Activated naive CD8-positive, alpha-beta T cell treated with anti-CD3 and anti-CD28 coated beads, Interleukin-2, amount 10 ng/mL, durations not matched to agents 7 days and 5 days (primary cell): ENCODE measurements at regions of chr2 and their contacts with region 1.

Region 1: DNA sequence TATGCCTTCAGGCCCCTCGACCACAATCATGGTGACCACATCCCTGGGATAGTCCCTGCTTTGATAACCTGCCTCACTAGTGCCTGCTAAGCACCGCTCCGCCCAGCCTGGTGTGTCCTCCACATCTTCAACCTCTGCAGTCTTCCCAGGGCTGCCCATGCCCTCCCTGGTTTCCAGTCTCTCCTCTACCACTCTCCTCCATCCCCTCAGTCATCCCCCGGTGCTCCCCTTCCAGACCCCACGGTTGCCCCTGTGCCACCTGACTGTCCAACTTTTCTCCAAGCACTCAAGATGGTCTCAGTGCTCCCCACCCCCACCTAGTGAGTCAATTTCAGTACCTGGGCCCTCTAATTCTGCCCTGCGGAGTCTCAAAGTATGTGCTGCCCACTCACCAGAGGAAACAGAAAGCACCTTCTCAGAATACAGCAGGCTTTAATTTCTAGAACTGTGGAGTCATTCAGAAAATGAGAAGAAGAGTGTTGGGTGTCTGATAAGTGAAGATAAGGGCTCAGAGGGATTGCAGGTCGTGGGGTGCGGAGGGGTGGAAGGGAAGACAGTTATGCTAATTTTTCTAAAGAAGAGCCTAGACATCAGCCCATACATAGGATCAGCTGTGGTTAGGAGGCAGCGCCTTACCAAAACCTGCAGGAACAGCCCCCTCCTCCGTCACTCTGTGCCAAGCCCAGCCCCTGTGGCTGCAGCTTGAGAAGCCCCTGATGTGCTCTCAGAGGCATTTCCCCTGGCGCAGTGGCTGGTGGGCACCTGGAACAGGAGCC is 53.6 kb upstream of the CAB39 start:
- DNase-seq: peak; percentile 77
- ATAC-seq: peak; percentile 74
- H3K4me3 Mint-ChIP-seq: peak overlapping the region; percentile 93
- H3K27ac Mint-ChIP-seq: peak overlapping the region; percentile 98
- H3K4me1 Mint-ChIP-seq: peaks cover 72% of the 10 kb centered on the region
- H3K27me3 Mint-ChIP-seq: no peaks in the 10 kb centered on the region

Region 2: GRCh38 chr2:230602562-230603230 is 56.4 kb before region 1 on chr2:
- POLR2A ChIA-PET with region 1: interaction called, 11 read pairs
- DNase-seq: peak; percentile 62
- ATAC-seq: peak; percentile 95
- H3K4me3 Mint-ChIP-seq: peak overlapping the region; percentile 70
- H3K27ac Mint-ChIP-seq: peak overlapping the region; percentile 95
- H3K4me1 Mint-ChIP-seq: peaks cover 38% of the 10 kb centered on the region
- H3K27me3 Mint-ChIP-seq: no peaks in the 10 kb centered on the region

Region 3: DNA sequence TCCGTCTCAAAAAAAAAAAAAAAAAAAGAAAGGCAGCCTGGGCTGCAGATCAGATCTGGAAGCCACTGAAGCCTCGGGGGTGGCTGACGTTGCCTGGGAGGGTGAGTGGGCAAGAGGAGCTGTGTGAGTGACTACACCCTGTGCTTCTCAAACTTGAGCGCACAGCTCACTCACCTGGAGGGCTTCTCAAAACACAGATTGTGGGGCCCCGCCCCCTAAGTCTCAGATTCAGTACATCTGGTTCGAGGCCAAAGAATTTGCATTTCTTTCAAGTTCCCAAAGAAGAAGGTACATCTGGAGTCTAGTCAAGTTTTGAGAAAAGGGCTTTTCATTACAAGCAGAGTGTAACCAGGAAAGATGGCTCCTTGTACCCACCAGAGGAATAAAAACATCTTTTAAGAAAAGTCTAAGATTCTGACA is 44.1 kb before region 1 on chr2:
- POLR2A ChIA-PET with region 1: interaction called, 23 read pairs
- DNase-seq: no peak
- ATAC-seq: peak; percentile 76
- H3K4me3 Mint-ChIP-seq: peak overlapping the region; percentile 5
- H3K27ac Mint-ChIP-seq: peak overlapping the region; percentile 65
- H3K4me1 Mint-ChIP-seq: peaks cover 43% of the 10 kb centered on the region
- H3K27me3 Mint-ChIP-seq: peaks cover 2% of the 10 kb centered on the region

Region 4: GRCh38 chr2:230643576-230644291 is 15.3 kb before region 1 on chr2:
- POLR2A ChIA-PET with region 1: interaction called, 96 read pairs
- DNase-seq: peak; percentile 52
- ATAC-seq: peak; percentile 97
- H3K4me3 Mint-ChIP-seq: peak overlapping the region; percentile 63
- H3K27ac Mint-ChIP-seq: peak overlapping the region; percentile 87
- H3K4me1 Mint-ChIP-seq: peaks cover 25% of the 10 kb centered on the region
- H3K27me3 Mint-ChIP-seq: no peaks in the 10 kb centered on the region

Region 5: DNA sequence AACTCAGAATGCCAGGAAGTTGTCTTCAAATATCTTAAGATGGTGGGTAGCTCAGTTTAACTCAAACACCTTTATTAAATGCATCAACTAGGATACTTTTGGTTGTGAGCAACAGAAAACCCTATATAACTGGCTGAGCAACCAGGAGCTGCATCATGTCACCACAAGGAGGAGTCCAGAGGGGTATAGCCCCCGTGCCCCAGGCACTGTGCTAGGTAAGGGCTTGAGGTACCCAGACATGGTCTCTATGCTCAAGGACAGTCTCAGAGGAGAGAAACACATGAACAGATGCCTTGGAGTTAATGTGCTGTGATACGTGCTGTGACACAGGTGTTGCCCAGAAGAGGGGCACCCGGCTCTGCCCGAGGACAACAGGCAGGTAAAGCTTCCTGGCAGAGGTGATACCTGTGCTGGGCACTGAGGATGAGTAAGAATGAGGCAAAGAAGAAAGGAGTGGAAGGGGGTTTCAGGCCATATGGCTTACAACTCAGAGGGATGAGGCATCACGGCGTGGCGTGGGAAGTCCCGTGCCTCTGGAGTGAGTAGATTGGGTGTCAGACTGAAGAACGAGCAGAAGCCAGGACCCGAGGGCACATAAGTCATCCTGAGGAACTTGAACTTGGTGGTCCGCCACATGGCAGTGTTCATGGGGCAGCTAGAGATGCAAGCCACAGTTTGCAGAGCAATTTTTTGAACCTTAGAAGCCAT is 21.6 kb after region 1 on chr2:
- POLR2A ChIA-PET with region 1: interaction called, 74 read pairs
- DNase-seq: no peak
- ATAC-seq: no peak
- H3K4me3 Mint-ChIP-seq: no peak overlapping the region
- H3K27ac Mint-ChIP-seq: no peak overlapping the region
- H3K4me1 Mint-ChIP-seq: peaks cover 50% of the 10 kb centered on the region
- H3K27me3 Mint-ChIP-seq: no peaks in the 10 kb centered on the region

Region 6: DNA sequence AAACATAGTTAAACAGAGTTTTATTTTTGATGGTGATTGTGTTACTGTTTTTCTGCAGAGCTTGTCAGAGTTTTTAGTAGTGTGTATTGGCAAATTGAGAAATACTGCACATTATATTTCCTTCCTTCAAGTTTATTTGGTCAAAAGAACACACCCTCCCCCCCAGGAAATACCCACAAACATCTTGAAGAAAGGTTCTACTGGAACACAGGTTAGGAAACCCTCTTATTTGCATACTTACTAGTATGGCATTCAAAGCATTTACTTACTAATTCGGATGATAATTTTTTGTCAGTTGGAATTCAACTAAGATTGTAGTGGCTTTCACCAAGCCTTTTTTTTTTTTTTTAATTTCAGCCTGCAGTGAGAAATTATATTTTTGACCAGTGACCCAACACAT is 62.6 kb after region 1 on chr2:
- POLR2A ChIA-PET with region 1: interaction called, 11 read pairs
- DNase-seq: no peak
- ATAC-seq: no peak
- H3K4me3 Mint-ChIP-seq: peak overlapping the region; percentile 58
- H3K27ac Mint-ChIP-seq: peak overlapping the region; percentile 60
- H3K4me1 Mint-ChIP-seq: peaks cover 73% of the 10 kb centered on the region
- H3K27me3 Mint-ChIP-seq: no peaks in the 10 kb centered on the region

Region 7: DNA sequence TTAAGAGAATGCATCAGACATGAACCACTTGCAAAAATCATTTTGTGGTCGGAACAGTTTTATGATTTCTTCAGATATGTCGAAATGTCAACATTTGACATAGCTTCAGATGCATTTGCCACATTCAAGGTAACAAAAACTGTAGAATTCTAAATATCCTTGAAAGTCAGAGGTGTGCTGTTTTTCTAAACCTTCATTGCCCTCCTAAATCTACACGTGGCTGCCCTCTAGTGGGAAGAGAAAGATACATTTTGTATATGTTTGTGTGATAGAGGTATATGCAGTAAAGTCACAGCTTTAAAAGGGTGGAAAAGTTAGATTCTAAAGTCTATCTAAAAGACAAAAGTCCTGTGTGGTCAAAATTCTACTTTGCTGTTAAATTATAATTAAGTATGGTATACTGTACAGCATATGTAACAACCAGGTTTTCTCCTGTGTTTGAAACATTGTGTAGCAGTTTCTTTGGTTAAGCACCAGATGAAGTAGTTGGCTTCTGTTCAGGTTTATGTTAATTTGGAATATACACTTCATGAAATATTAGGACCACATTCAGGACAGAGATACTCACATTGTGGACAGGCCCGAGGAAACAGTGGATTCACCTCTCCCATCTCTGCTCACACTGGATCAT is 139.8 kb after region 1 on chr2:
- POLR2A ChIA-PET with region 1: interaction called, 15 read pairs
- DNase-seq: no peak
- ATAC-seq: no peak
- H3K4me3 Mint-ChIP-seq: peak overlapping the region; percentile 21
- H3K27ac Mint-ChIP-seq: peak overlapping the region; percentile 57
- H3K4me1 Mint-ChIP-seq: peaks cover 24% of the 10 kb centered on the region
- H3K27me3 Mint-ChIP-seq: no peaks in the 10 kb centered on the region

Region 8: DNA sequence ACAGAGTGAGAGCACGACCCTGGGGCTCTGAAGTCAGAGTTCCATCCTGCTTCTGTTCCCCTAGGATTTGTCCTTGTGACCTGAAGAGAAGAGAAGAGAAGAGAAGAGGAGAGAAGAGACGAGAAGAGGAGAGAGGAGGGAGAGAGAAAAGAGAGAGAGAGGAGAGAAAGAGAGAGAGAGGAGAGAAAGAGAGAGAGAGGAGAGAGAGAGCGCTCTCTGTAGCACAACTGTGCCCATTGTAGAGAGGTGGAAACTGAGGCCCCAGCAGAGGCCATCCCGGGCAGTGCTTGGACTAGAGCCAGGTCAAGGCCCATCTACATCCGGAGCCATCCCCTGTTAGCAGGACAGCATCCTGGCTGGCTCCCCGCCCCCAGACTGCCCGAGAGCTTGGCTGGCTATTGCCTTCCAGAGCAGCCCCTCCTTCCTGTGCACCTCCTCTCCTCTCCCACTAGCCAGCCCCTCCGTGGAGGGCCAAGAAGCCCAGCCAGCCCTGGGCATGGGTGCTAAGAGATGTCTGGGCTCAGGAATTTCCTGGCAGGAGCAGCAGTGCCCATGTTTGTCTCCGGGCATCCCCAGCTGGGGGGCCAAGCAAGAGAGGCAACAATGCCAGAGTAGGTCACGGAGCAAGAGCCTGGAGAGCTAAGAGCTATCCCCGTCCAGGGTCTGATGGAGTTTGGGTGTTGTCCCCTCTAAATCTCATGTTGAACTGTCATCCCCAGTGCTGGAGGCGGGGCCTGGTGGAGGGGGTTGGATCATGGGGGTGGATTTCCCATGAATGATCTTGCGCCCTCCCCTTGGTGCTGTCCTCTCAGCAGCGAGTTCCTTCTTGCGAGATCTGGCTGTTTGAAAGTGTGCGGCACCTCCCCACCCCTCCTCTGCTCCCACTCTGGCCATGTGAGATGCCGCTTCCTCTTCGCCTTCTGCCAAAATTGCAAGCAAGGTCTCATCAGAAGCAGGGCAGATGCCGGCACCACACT is 284.1 kb after region 1 on chr2:
- POLR2A ChIA-PET with region 1: no interaction called
- DNase-seq: peak; percentile 58
- ATAC-seq: peak; percentile 91
- H3K4me3 Mint-ChIP-seq: peak overlapping the region; percentile 70
- H3K27ac Mint-ChIP-seq: peak overlapping the region; percentile 76
- H3K4me1 Mint-ChIP-seq: peaks cover 16% of the 10 kb centered on the region
- H3K27me3 Mint-ChIP-seq: peaks cover 2% of the 10 kb centered on the region